ENCODE measurements at regions of chr17 and their contacts with region 1.

Region 1: DNA sequence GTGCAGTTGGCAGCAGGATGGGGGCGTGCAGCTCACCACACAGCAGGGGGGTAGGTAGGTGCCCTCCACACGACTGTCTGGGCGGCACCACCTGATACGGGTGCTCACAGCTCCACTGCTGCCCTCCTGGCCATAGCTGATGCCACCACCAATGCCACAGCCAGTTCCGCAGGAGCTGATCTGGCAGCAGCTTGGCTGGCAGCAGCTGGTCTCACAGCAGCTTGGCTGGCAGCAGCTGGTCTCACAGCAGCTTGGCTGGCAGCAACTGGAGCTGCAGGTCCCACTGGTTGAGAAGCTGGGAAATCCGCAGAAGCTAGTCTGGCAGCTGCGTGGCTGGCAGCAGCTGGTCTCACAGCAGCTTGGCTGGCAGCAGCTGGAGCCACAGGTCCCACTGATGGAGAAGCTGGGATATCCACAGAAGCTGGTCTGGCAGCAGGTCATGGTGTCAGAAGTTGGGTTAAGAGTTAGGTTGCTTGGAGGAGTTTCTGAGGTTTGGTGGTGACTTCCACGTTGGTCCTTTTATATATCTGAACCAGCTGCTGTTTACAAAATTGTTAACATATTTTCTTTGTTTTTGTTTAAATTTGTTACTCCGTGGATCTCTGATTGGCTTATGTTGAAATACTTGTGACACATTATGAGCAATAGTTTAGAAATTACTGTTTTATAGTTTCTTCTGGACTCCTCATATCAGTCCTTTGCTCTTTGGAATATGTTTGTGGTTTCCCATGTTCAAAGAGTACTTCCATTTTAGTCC is at the start of gene KRTAP1-5:
- DNase-seq: peak; percentile 91
- ATAC-seq: peak; percentile 93
- H3K4me3 ChIP-seq: no peak within 1 kb of the TSS
- H3K27ac ChIP-seq: peak within 1 kb of the TSS; percentile 47
- H3K4me1 ChIP-seq: peaks cover 13% of the 10 kb centered on the region
- H3K27me3 ChIP-seq: no peaks in the 10 kb centered on the region
- CTCF ChIP-seq: no peak
- POLR2A ChIP-seq: no peak
- RAD21 ChIP-seq: no peak
- total RNA-seq, gene KRTAP1-5: 33.1 and 34.8 TPM in 2 replicates

Region 2: DNA sequence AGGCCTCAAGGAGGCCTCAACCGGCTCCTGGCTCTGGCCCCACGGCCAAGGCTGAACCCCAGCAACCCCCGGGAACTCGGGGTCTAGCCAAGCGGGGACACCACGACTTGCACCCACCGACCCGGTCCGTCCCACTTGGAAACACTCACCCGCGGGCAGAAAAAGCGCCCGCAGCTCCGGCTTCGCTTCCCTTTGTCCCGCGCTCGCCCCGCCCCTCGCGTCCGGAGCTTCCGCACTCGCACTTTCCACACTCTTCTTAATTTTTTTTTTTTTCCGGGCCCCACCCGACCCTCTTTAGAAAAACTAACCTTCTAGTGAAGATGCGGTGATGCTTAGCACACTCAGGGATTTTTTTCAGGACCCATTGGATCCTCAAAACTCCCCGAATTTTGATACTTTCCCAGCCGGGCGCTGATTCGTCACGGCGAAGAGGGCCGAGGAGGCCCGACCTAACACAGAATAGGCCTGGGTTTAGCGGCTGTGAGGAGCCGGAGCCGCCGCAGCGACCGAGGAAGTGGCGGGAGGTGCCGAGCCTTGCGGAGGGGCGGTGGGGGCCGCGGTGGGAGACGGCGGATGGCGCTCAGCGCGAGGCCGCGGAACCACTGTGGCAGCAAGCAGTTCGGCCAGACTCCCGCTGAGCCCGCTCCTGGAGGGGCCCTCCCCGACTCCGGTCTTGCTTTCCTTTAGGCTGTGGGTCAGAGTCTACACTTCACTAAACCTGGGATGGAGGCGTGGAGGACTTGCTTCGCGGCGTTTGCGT is 379.1 kb before region 1 on chr17 and contains the start of gene SMARCE1:
- CTCF ChIA-PET with region 1: no interaction called
- POLR2A ChIA-PET with region 1: no interaction called
- dilution Hi-C with region 1: no loop called
- in situ Hi-C with region 1: no loop called
- intact Hi-C with region 1: no loop called
- DNase-seq: peak; percentile 67
- ATAC-seq: peak; percentile 84
- H3K4me3 ChIP-seq: peak within 1 kb of the TSS; percentile 93
- H3K27ac ChIP-seq: peak within 1 kb of the TSS; percentile 94
- H3K4me1 ChIP-seq: peaks cover 5% of the 10 kb centered on the region
- H3K27me3 ChIP-seq: no peaks in the 10 kb centered on the region
- CTCF ChIP-seq: no peak
- POLR2A ChIP-seq: peak; percentile 75
- RAD21 ChIP-seq: no peak
- total RNA-seq, gene SMARCE1: 119 and 169 TPM in 2 replicates

Region 3: DNA sequence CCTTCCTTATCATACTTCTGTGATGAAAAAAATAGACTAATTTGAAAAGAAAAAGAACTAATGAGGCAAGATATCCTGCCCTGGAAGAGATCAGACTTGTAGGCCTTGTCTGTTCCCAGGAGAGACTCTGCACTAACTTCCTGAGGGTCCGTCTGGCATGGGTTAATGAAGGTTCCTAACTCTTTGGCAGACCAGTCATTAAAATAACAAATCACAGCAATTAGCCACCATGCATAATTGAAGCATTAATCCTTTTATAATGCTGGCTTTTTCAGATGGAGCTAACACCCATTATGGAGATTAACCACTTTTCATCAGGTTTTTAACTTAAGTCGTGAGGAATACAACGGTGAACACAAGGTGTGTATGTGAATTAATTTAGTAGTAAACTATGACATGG is 194.1 kb before region 1 on chr17:
- CTCF ChIA-PET with region 1: no interaction called
- POLR2A ChIA-PET with region 1: no interaction called
- dilution Hi-C with region 1: no loop called
- in situ Hi-C with region 1: no loop called
- intact Hi-C with region 1: no loop called
- DNase-seq: no peak
- ATAC-seq: no peak
- H3K4me3 ChIP-seq: no peak overlapping the region
- H3K27ac ChIP-seq: no peak overlapping the region
- H3K4me1 ChIP-seq: no peaks in the 10 kb centered on the region
- H3K27me3 ChIP-seq: no peaks in the 10 kb centered on the region
- CTCF ChIP-seq: no peak
- POLR2A ChIP-seq: no peak
- RAD21 ChIP-seq: no peak

Region 4: GRCh38 chr17:41008805-41009204 is 18.1 kb before region 1 on chr17 and contains the start of gene KRTAP3-1:
- CTCF ChIA-PET with region 1: no interaction called
- POLR2A ChIA-PET with region 1: no interaction called
- dilution Hi-C with region 1: no loop called
- in situ Hi-C with region 1: no loop called
- intact Hi-C with region 1: loop called (anchors 2 kb)
- DNase-seq: no peak
- ATAC-seq: no peak
- H3K4me3 ChIP-seq: no peak within 1 kb of the TSS
- H3K27ac ChIP-seq: no peak within 1 kb of the TSS
- H3K4me1 ChIP-seq: peaks cover 1% of the 10 kb centered on the region; the same call in 1 of the 2 replicates
- H3K27me3 ChIP-seq: no peaks in the 10 kb centered on the region
- CTCF ChIP-seq: no peak
- POLR2A ChIP-seq: no peak
- RAD21 ChIP-seq: no peak
- total RNA-seq, gene KRTAP3-1: not detected in 2 replicates

Region 5: DNA sequence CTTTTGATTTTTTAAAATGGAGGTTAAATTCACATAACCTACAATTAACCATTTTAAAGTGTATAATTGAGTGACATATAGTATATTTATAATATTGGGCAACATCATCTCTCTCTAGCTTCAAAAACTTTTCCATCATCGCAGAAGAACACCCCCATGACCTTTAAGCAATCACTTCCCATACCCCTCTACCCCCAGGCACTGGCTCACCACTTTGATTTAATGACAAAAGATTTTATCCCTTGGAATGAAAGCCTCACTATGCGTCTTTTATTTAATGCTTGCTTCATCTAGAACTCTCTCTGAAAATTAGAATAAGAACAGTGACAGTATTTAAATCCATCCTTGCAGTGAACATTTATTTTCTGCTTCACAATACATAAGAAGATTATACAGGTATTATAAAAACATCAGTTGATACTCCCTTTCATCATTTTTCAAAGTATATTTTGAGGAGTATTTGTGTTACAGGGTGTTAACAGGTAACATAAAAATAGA is 11.0 kb after region 1 on chr17:
- CTCF ChIA-PET with region 1: interaction called, 3 read pairs
- POLR2A ChIA-PET with region 1: interaction called, 17 read pairs
- dilution Hi-C with region 1: no loop called
- in situ Hi-C with region 1: no loop called
- intact Hi-C with region 1: no loop called
- DNase-seq: no peak
- ATAC-seq: no peak
- H3K4me3 ChIP-seq: no peak overlapping the region
- H3K27ac ChIP-seq: no peak overlapping the region
- H3K4me1 ChIP-seq: peaks cover 2% of the 10 kb centered on the region; the same call in 1 of the 2 replicates
- H3K27me3 ChIP-seq: no peaks in the 10 kb centered on the region
- CTCF ChIP-seq: no peak
- POLR2A ChIP-seq: no peak
- RAD21 ChIP-seq: no peak

Region 6: GRCh38 chr17:41071606-41072360 is 44.9 kb after region 1 on chr17:
- CTCF ChIA-PET with region 1: no interaction called
- POLR2A ChIA-PET with region 1: no interaction called
- dilution Hi-C with region 1: no loop called
- in situ Hi-C with region 1: no loop called
- intact Hi-C with region 1: no loop called
- DNase-seq: no peak
- ATAC-seq: no peak
- H3K4me3 ChIP-seq: no peak overlapping the region
- H3K27ac ChIP-seq: no peak overlapping the region
- H3K4me1 ChIP-seq: no peaks in the 10 kb centered on the region; the same call in 1 of the 2 replicates
- H3K27me3 ChIP-seq: no peaks in the 10 kb centered on the region
- CTCF ChIP-seq: no peak
- POLR2A ChIP-seq: no peak
- RAD21 ChIP-seq: no peak

Measured in IMR-90 (cell line).